ENCODE measurements at regions of chr2 and their contacts with region 1.

Region 1: DNA sequence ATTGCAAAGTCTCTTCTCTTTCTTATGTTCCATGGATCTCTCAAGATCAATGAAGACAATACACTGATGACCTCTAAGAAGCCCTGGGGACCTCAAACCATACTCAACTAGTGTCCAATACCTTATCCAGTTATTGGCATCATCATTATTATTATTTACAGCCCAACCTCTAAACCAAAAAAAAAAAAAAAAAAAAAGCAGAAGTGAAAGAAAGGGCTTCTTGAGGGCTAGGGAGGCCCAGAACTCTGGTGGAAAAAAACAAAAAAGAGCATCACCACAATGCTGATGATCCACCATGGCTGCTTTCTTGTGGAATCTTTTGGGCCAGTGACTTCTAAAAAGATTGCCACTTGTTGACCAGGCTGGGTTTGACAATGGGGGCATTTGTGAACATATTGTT is 324.9 kb downstream of the LPIN1 start:
- DNase-seq: no peak
- ATAC-seq: peak; percentile 49
- H3K4me3 ChIP-seq: no peak overlapping the region
- H3K27ac ChIP-seq: no peak overlapping the region
- H3K4me1 ChIP-seq: peaks cover 31% of the 10 kb centered on the region
- H3K27me3 ChIP-seq: no peaks in the 10 kb centered on the region
- CTCF ChIP-seq: no peak
- EP300 ChIP-seq: peak; percentile 69 to 83; a peak in 3 of 4 replicates
- POLR2A ChIP-seq: no peak
- RAD21 ChIP-seq: no peak

Region 2: DNA sequence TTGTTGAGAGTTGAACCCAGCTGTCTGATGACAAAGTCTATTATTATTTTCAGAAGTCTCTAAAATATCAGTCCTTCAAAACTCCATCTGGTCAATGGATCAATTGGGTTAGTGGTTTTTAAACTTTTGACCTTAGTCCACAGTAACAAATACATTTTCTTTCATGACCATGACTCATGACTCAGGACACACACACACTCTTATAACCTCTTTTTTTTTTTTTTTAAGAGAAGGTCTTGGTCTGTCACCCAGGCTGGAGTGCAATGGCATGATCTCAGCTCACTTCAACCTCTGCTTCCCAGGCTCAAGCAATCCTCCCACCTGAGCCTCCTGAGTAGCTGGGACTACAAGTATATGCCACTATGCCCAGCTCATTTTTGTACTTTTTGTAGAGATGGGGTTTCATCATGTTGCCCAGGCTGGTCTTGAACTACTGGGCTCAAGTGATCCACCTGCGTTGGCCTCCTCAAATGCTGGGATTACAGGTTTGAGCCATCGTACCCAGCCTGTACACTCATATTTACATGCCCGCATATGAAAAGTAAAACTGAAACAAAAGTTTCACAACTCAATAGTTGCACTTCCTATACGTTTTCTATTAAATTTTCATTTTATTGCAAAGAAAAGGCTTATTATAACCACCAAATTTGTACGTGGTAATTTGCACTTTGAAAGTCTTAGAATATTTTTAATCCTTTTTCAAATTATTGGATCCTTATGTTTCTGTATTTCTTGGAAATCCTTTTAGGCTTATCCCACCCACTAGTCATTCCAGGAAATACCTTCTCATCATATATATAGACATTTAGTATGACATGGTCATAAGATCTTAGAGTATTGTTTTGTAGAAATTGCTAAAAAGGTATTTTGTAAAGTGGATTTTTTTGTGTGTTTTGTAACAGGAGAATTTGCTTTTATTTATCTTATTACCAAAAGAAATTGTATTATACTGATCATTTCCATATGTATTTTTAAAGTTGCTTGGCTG is 125.9 kb before region 1 on chr2:
- CTCF ChIA-PET with region 1: no interaction called
- POLR2A ChIA-PET with region 1: no interaction called
- RAD21 ChIA-PET with region 1: no interaction called
- SMC1A ChIA-PET with region 1: no interaction called
- in situ Hi-C with region 1: no loop called
- intact Hi-C with region 1: loop called (anchors 5 kb)
- DNase-seq: peak; percentile 50
- ATAC-seq: peak; percentile 90
- H3K4me3 ChIP-seq: no peak overlapping the region
- H3K27ac ChIP-seq: peak overlapping the region; percentile 48; the same call in 1 of the 2 replicates
- H3K4me1 ChIP-seq: peaks cover 13% of the 10 kb centered on the region
- H3K27me3 ChIP-seq: no peaks in the 10 kb centered on the region
- CTCF ChIP-seq: no peak
- EP300 ChIP-seq: no peak
- POLR2A ChIP-seq: no peak
- RAD21 ChIP-seq: no peak

Region 3: DNA sequence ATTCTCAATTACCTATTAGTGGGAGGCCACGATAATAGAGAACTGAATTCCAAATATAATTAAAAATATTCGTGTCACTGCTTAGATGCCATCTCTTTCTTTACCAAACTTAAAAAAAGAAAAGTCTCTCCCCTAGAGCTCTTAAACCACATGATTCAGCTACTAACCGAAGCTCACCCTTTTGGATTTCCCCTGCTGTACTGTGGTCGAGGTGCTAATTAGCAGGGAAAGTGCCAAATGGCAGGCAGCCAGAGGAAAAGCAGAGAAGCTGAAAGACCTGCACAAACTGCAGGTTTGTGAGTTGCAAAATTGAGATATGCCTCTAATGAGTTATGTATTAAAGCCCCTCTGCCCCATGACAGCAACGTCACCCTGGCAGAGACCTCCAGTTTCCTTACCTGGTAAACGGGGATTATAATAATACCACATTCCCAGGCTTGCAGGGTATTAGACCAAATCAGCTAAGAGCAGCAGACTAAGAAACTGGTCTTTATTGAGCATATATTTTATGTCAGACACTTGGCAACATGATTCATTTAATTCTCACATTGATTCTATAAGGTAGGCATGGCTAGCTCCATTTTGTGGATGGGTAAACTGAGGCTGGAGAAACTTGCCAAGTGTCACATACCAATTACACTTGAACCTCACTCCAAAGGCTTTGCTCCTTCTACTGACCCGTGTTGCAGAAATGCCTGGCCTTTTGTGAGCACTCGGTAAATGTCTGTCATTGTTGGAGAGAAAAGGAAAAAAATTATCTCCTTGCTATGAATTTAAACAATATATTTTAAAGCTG is 65.2 kb before region 1 on chr2:
- CTCF ChIA-PET with region 1: no interaction called
- POLR2A ChIA-PET with region 1: interaction called, 3 read pairs
- RAD21 ChIA-PET with region 1: interaction called, 5 read pairs
- SMC1A ChIA-PET with region 1: interaction called, 6 read pairs
- in situ Hi-C with region 1: no loop called
- intact Hi-C with region 1: loop called (anchors 2 kb)
- DNase-seq: peak; percentile 89
- ATAC-seq: peak; percentile 84
- H3K4me3 ChIP-seq: no peak overlapping the region
- H3K27ac ChIP-seq: peak overlapping the region; percentile 71; the same call in 1 of the 2 replicates
- H3K4me1 ChIP-seq: peaks cover 61% of the 10 kb centered on the region
- H3K27me3 ChIP-seq: no peaks in the 10 kb centered on the region
- CTCF ChIP-seq: no peak
- EP300 ChIP-seq: peak; percentile 93 to 95
- POLR2A ChIP-seq: no peak
- RAD21 ChIP-seq: no peak

Region 4: DNA sequence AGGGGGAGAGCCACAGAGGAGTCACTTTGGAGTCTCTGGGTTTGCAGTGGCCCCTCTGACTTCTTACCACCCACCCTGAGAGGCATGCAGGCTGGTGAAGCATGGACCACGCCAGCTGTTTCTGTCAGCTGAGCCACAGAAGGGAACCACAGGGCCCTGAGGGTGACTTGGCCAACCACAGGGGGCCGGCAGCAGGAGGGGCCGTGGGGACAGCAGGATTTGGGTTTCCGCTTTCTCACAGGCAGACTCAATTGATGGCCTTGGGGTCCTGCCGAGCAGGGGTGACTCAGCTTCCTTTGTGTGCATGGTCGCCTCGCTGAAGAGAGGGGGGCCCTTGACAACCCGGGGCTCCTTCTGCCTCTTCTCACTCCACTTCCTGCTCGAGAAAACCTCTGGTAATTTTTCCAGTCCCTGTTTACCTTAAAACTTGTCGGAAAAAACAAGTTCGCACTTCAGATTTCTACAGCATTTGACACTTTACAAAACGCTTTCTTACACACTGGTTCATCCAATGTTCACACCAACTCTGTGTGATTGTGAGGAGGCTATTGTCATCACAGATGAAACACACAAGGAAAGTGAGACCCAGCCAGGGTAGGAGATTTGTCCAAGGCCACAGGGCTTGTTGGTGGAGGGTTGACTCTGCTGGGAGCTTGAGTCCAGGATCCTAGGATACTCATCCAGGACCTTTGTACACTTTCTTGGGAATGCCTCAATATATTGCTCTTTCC is 13.7 kb before region 1 on chr2:
- CTCF ChIA-PET with region 1: interaction called, 4 read pairs
- POLR2A ChIA-PET with region 1: interaction called, 6 read pairs
- RAD21 ChIA-PET with region 1: interaction called, 6 read pairs
- SMC1A ChIA-PET with region 1: interaction called, 12 read pairs
- in situ Hi-C with region 1: no loop called
- intact Hi-C with region 1: no loop called
- DNase-seq: peak; percentile 89
- ATAC-seq: peak; percentile 95
- H3K4me3 ChIP-seq: no peak overlapping the region
- H3K27ac ChIP-seq: peak overlapping the region; percentile 45
- H3K4me1 ChIP-seq: peaks cover 17% of the 10 kb centered on the region
- H3K27me3 ChIP-seq: no peaks in the 10 kb centered on the region
- CTCF ChIP-seq: no peak
- EP300 ChIP-seq: peak; percentile 72 to 74
- POLR2A ChIP-seq: no peak
- RAD21 ChIP-seq: no peak

Region 5: GRCh38 chr2:12116228-12116750 is 45.0 kb after region 1 on chr2:
- CTCF ChIA-PET with region 1: interaction called, 3 read pairs
- POLR2A ChIA-PET with region 1: no interaction called
- RAD21 ChIA-PET with region 1: interaction called, 4 read pairs
- SMC1A ChIA-PET with region 1: interaction called, 4 read pairs
- in situ Hi-C with region 1: no loop called
- intact Hi-C with region 1: loop called (anchors 2 kb)
- DNase-seq: peak; percentile 51
- ATAC-seq: peak; percentile 92
- H3K4me3 ChIP-seq: no peak overlapping the region
- H3K27ac ChIP-seq: no peak overlapping the region
- H3K4me1 ChIP-seq: peaks cover 13% of the 10 kb centered on the region
- H3K27me3 ChIP-seq: no peaks in the 10 kb centered on the region
- CTCF ChIP-seq: 0 out of 6 replicates have a peak, but pooled peaks of 1 of the 3 experiments have one; percentile 6
- EP300 ChIP-seq: peak; percentile 56 to 65; a peak in 2 of 4 replicates
- POLR2A ChIP-seq: no peak
- RAD21 ChIP-seq: no peak

Region 6: GRCh38 chr2:12176623-12177454 is 105.5 kb after region 1 on chr2:
- CTCF ChIA-PET with region 1: no interaction called
- POLR2A ChIA-PET with region 1: no interaction called
- RAD21 ChIA-PET with region 1: no interaction called
- SMC1A ChIA-PET with region 1: interaction called, 3 read pairs
- in situ Hi-C with region 1: no loop called
- intact Hi-C with region 1: loop called (anchors 5 kb)
- DNase-seq: peak; percentile 45
- ATAC-seq: peak; percentile 97
- H3K4me3 ChIP-seq: no peak overlapping the region
- H3K27ac ChIP-seq: no peak overlapping the region
- H3K4me1 ChIP-seq: peaks cover 10% of the 10 kb centered on the region
- H3K27me3 ChIP-seq: no peaks in the 10 kb centered on the region
- CTCF ChIP-seq: no peak
- EP300 ChIP-seq: no peak
- POLR2A ChIP-seq: no peak
- RAD21 ChIP-seq: no peak

Measured in GM12878 (cell line).